Right lobe of liver (tissue), 6 donors: ENCODE measurements at regions of chr6 and their contacts with region 1.

Region 1: GRCh38 chr6:16409531-16410441 is 171.4 kb downstream of the GMPR start:
- DNase-seq: peak in 2 of 3 donors; percentile 48 to 57
- ATAC-seq: peak; percentile 67 to 79 (median 73)
- H3K4me3 ChIP-seq: no peak overlapping the region
- H3K27ac ChIP-seq: no peak overlapping the region
- H3K4me1 ChIP-seq: no peaks in the 10 kb centered on the region
- H3K27me3 ChIP-seq: no peaks in the 10 kb centered on the region
- CTCF ChIP-seq: peak; percentile 53 to 65 (median 56)
- POLR2A ChIP-seq: no peak

Region 2: GRCh38 chr6:16277101-16277981 is 132.4 kb before region 1 on chr6:
- intact Hi-C with region 1: no loop called
- DNase-seq: no peak
- ATAC-seq: peak in 1 of 4 donors; percentile 29
- H3K4me3 ChIP-seq: no peak overlapping the region
- H3K27ac ChIP-seq: no peak overlapping the region
- H3K4me1 ChIP-seq: no peaks in the 10 kb centered on the region
- H3K27me3 ChIP-seq: no peaks in the 10 kb centered on the region
- CTCF ChIP-seq: no peak
- POLR2A ChIP-seq: no peak

Region 3: DNA sequence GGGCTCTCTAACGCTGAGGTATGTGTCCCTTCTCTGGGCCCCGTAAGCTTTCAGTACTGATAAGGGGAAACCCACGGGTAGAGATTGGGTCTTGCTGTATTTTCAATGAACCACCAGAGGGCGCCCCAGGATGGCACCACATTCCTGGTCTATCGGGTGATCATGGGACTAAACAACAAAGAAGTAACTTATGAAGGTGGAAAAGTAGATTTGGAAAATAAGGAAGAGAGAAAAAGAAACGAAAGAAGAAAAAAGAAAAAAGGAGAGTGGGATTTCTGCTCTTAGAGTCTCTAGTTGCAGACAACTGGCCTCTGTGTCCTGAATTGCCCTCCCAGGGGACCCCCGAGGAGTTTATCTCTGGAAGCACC is 77.6 kb before region 1 on chr6:
- intact Hi-C with region 1: loop called in 1 of 2 experiments (anchors 10 kb)
- DNase-seq: peak; percentile 70 to 79 (median 74)
- ATAC-seq: peak; percentile 84 to 90 (median 86)
- H3K4me3 ChIP-seq: no peak overlapping the region
- H3K27ac ChIP-seq: no peak overlapping the region
- H3K4me1 ChIP-seq: peaks cover 0 to 15% (median 3%) of the 10 kb centered on the region in 4 donors
- H3K27me3 ChIP-seq: no peaks in the 10 kb centered on the region
- CTCF ChIP-seq: peak; percentile 85 to 95 (median 94)
- POLR2A ChIP-seq: no peak

Region 4: DNA sequence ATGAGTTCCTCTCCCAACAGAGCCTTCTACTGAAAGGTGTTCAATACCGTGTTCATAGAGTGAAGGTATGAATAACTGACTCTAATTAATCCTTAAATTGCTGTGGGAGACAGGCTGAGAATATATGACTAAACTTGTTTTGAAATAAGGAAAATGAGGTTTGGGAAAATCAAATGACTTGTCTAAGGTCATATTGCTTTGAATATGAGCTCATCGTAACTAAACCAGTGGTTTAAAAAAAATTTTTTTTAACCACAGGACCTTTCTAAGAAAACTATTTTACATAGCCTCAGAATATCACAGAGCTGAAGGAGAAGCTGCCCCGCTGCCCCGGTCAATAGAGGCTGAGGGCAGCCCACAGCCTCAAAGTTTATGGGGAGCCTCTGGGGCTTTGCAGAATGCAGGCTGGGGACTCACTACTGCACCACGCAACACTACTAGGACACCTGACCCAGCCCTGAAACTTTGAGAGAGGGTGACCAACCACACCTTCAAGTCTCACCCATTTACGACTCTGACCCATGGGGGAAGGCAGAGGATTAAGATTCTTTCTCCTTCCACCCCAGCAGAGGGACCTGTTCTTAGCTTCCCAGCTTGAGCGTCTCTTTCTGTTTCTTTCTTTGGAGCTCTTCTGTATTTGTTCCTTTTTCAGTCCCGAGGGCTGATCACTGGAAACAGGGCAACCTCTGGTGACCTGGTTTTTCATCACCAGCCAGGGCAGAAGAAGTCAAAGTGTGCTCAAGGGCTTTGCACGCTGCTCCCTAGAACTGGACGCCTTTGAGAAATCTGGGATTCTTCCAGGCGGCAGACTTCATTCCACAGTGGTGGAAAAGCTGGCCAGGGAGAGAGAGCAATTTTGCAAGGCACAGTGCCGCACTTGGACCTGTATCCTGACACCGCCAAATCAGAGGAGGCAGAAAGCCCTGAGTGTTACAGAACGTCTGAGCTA is 131.3 kb after region 1 on chr6:
- intact Hi-C with region 1: no loop called
- DNase-seq: no peak
- ATAC-seq: peak; percentile 33 to 80 (median 41)
- H3K4me3 ChIP-seq: no peak overlapping the region
- H3K27ac ChIP-seq: no peak overlapping the region
- H3K4me1 ChIP-seq: no peaks in the 10 kb centered on the region
- H3K27me3 ChIP-seq: no peaks in the 10 kb centered on the region
- CTCF ChIP-seq: no peak
- POLR2A ChIP-seq: no peak